Activated naive CD4-positive, alpha-beta T cell treated with anti-CD3 and anti-CD28 coated beads for 36 hours (primary cell): ENCODE measurements at regions of chr1 and their contacts with region 1.

Region 1: GRCh38 chr1:31010086-31010989 is 55.2 kb downstream of the PUM1 start:
- DNase-seq: peak; percentile 70
- H3K4me3 Mint-ChIP-seq: no peak overlapping the region
- H3K27ac Mint-ChIP-seq: peak overlapping the region; percentile 81
- H3K4me1 Mint-ChIP-seq: peaks cover 61% of the 10 kb centered on the region
- H3K27me3 Mint-ChIP-seq: no peaks in the 10 kb centered on the region

Region 2: DNA sequence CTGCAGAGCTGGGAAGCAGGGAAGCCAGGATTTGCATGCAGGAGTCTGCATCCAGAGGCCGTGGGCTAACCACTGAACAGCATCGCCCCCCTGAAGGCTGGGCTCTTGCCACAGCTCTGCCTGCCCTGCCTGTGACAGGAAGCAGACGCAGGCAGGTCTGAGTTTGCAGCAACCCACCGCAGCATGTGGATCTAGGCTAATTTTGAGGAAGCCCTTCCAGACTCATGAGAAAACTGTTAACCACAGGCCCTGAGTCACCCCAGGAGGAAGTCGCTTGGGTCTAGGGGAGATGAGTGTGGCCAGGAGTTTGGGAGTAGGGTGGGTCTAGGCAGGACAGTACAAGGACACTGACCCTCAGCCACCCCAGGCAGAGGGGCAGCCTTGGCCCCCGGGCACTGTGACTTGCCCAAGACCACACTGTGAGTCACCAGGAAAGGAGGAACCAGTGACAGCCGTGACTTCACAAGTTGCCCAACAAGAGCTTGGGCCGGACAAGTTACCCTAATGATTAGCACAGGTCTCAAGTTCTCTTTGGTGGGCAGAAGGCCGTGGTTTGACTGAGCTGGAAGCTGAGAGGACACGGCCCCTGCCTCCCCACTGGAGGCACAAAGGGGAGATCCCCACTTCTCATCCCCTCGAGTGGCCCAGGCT is 253.7 kb before region 1 on chr1:
- CTCF ChIA-PET with region 1: no interaction called
- intact Hi-C with region 1: loop called (anchors 5 kb)
- DNase-seq: peak; percentile 91
- H3K4me3 Mint-ChIP-seq: peak overlapping the region; percentile 98
- H3K27ac Mint-ChIP-seq: peak overlapping the region; percentile 100
- H3K4me1 Mint-ChIP-seq: peaks cover 76% of the 10 kb centered on the region
- H3K27me3 Mint-ChIP-seq: no peaks in the 10 kb centered on the region

Region 3: GRCh38 chr1:30966690-30967369 is 43.5 kb before region 1 on chr1:
- CTCF ChIA-PET with region 1: no interaction called
- intact Hi-C with region 1: no loop called
- DNase-seq: no peak
- H3K4me3 Mint-ChIP-seq: no peak overlapping the region
- H3K27ac Mint-ChIP-seq: no peak overlapping the region
- H3K4me1 Mint-ChIP-seq: peaks cover 7% of the 10 kb centered on the region
- H3K27me3 Mint-ChIP-seq: no peaks in the 10 kb centered on the region

Region 4: DNA sequence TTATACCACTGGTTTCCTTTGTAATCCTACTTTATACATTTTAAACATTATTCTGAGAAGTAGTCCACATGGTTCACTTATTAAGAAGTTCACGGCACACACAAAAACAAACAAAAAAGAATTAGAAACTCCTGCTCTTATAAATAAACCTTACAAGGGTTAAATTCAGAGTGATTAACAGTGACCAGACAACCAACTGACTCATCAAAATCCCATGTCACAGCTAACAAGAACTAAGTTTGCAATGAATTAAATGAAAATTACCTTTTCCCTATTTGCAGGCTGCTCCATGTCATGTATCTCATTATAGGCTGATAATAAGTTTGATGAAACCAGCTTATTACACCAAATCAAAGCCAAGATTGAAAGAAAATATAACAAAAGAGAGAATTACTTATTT is 22.3 kb before region 1 on chr1:
- CTCF ChIA-PET with region 1: interaction called, 3 read pairs
- intact Hi-C with region 1: loop called (anchors 2 kb)
- DNase-seq: no peak
- H3K4me3 Mint-ChIP-seq: no peak overlapping the region
- H3K27ac Mint-ChIP-seq: no peak overlapping the region
- H3K4me1 Mint-ChIP-seq: peaks cover 55% of the 10 kb centered on the region
- H3K27me3 Mint-ChIP-seq: no peaks in the 10 kb centered on the region

Region 5: DNA sequence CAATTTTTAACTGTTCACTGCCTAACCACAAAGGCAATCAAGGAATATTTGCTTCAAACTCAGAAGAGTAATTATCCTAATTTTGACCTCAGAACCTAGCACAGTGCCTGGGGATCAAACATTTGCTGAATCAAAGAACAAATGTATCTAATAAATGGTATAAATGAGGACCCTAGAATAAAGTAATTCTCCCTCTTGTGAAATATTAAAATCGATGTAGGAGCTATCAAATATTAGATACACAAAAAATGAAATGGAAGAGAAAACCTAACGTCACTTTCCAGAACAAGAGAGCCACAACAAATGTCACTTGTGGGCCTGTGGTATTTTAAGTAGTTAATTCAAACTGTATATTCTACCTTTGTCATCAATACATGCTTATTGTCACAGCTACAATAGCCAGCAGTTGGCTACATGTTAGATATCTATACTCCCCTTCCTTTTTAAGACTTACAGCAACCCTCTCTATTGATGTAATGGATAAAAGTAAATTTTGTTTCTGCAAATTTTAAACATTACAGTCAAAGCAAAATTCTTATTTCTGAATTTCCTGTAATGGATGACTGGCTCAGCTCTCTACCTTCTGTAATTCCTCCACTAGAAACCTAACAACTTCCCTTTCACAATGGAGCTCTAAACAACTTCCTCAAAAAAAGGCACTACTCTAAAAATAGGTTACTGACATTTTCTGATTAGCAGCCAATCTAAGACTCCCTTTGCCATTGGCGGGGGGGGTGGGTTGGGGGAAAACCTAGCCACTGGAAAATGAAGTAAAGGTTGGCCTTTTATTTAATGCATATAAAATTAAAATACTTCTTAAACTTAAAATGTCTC is 17.6 kb after region 1 on chr1:
- CTCF ChIA-PET with region 1: no interaction called
- intact Hi-C with region 1: loop called (anchors 1 kb)
- DNase-seq: no peak
- H3K4me3 Mint-ChIP-seq: no peak overlapping the region
- H3K27ac Mint-ChIP-seq: no peak overlapping the region
- H3K4me1 Mint-ChIP-seq: peaks cover 79% of the 10 kb centered on the region
- H3K27me3 Mint-ChIP-seq: no peaks in the 10 kb centered on the region

Region 6: GRCh38 chr1:31054349-31054748 is 44.0 kb after region 1 on chr1:
- CTCF ChIA-PET with region 1: interaction called, 4 read pairs
- intact Hi-C with region 1: loop called (anchors 1 kb)
- DNase-seq: peak; percentile 48
- H3K4me3 Mint-ChIP-seq: no peak overlapping the region
- H3K27ac Mint-ChIP-seq: peak overlapping the region; percentile 72
- H3K4me1 Mint-ChIP-seq: peaks cover 74% of the 10 kb centered on the region
- H3K27me3 Mint-ChIP-seq: no peaks in the 10 kb centered on the region

Region 7: DNA sequence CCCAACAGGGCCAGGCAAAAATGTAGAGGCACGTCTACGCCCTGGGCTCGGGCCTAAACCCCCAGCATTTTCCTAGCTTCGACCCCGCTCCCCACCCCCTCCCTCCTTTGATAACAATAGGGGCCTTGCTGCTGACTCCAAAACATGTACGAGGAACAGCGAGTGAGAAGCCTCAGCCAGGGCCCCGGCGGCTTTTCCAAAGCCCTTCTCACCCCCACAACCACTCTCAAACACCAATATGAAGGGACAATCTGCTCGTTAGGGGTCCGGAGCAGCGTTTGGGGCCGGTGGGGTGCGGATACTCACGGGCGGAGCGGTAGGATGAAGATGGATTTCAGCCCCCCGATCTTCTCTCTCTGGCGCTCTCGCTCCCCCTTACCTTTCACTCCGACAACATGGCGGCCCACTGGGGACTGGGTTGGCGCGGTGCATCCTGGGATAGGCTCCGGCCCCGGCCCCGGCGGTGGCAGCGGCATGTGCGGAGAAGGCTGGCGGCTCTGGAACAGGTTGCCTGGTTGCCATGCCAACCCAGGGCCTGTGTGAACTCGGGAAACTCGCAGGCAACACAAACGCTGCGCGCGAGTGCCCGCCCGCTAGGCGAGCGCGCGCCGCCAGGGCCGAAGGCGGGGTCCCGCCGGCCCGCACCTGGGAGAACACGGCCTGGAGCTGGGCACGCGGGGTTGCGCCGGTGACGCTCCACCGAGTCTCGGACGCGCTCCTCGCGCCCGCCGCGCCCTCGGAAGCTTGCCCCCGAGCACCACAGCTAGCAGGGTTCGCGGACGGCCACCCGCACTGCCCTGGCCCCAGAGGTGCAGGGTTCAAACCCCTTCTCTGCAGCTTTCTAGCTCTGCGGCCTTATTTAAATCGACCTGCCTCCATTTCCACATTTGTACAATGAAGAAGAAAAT is 55.2 kb after region 1 on chr1 and contains the start of gene PUM1:
- CTCF ChIA-PET with region 1: no interaction called
- intact Hi-C with region 1: loop called (anchors 1 kb)
- DNase-seq: peak; percentile 99
- H3K4me3 Mint-ChIP-seq: peak within 1 kb of the TSS; percentile 99
- H3K27ac Mint-ChIP-seq: peak within 1 kb of the TSS; percentile 96
- H3K4me1 Mint-ChIP-seq: peaks cover 27% of the 10 kb centered on the region
- H3K27me3 Mint-ChIP-seq: no peaks in the 10 kb centered on the region
- total RNA-seq, gene PUM1: 84.9 to 89.7 TPM